ENCODE measurements at regions of chr15 and their contacts with region 1.

Region 1: DNA sequence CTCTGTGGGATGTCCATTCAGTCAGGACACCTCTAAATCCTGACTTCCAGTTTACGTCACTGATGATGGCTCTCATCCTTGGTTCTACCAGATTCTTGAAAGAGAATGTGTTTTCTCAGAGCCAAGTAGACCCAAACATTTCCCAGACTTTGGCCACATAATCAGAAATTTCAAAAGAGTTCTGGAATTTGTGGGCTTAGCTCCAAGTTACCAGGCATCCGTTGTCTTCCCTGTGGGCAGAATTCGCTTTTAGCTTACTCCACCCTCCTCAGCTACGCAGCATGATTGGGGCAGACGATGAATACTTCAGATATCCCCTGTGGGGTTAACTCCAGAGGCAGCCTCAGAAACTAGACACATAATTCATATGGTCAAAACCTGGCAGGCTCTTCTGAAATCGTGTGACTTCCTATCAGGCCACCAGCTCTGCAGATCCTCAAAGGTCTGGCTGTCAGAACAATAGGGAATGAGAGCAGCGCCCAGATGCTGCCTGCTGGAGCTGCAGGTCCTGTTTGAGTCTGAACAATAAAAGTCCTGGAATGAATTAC is 30.6 kb downstream of the CRTC3 start:
- DNase-seq: no peak
- H3K4me3 ChIP-seq: no peak overlapping the region
- H3K4me3 Mint-ChIP-seq: peak overlapping the region in 2 of 8 donors; percentile 1 to 5
- H3K27ac ChIP-seq: no peak overlapping the region
- H3K27ac Mint-ChIP-seq: peak overlapping the region in 5 of 7 donors; percentile 5 to 89 (median 81)
- H3K4me1 ChIP-seq: peaks cover 76% of the 10 kb centered on the region
- H3K4me1 Mint-ChIP-seq: peaks cover 58 to 88% (median 69%) of the 10 kb centered on the region in 4 donors
- H3K27me3 ChIP-seq: no peaks in the 10 kb centered on the region
- H3K27me3 Mint-ChIP-seq: no peaks in the 10 kb centered on the region

Region 2: GRCh38 chr15:90571063-90571541 is 10.8 kb after region 1 on chr15:
- CTCF ChIA-PET with region 1: interaction called, 8 read pairs
- POLR2A ChIA-PET with region 1: interaction called, 11 read pairs
- intact Hi-C with region 1: no loop called
- DNase-seq: no peak
- H3K4me3 ChIP-seq: no peak overlapping the region
- H3K4me3 Mint-ChIP-seq: peak overlapping the region in 5 of 8 donors; percentile 3 to 56 (median 43)
- H3K27ac ChIP-seq: no peak overlapping the region
- H3K27ac Mint-ChIP-seq: peak overlapping the region in 6 of 7 donors; percentile 4 to 89 (median 43)
- H3K4me1 ChIP-seq: peaks cover 89% of the 10 kb centered on the region
- H3K4me1 Mint-ChIP-seq: peaks cover 45 to 82% (median 61%) of the 10 kb centered on the region in 4 donors
- H3K27me3 ChIP-seq: no peaks in the 10 kb centered on the region
- H3K27me3 Mint-ChIP-seq: no peaks in the 10 kb centered on the region

Region 3: DNA sequence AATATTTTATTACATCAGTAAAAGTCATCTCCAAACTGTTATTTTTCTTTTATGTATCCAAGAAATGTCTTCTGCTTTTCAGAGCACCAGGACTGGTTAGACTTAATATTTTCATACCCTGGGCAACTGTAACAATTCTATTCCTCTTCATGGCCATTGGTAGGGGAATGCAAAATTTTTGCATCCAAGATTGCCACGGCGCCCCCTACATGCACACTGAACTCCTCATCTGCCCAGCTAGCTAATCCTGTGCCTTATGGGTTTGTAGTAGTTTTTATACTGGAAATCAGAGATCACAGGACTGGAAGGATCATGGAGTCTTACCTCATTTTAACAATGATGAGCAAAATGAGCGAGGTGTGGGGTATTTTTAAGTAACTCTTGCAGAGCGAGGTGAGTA is 43.6 kb after region 1 on chr15:
- CTCF ChIA-PET with region 1: interaction called, 18 read pairs
- POLR2A ChIA-PET with region 1: interaction called, 7 read pairs
- intact Hi-C with region 1: loop called (anchors 5 kb)
- DNase-seq: peak in 4 of 5 donors; percentile 22 to 35 (median 30)
- H3K4me3 ChIP-seq: no peak overlapping the region
- H3K4me3 Mint-ChIP-seq: no peak overlapping the region
- H3K27ac ChIP-seq: no peak overlapping the region
- H3K27ac Mint-ChIP-seq: peak overlapping the region in 5 of 7 donors; percentile 12 to 75 (median 60)
- H3K4me1 ChIP-seq: peaks cover 19% of the 10 kb centered on the region
- H3K4me1 Mint-ChIP-seq: peaks cover 9 to 41% (median 31%) of the 10 kb centered on the region in 4 donors
- H3K27me3 ChIP-seq: no peaks in the 10 kb centered on the region
- H3K27me3 Mint-ChIP-seq: no peaks in the 10 kb centered on the region